ENCODE measurements at regions of chr17 and their contacts with region 1.

Region 1: DNA sequence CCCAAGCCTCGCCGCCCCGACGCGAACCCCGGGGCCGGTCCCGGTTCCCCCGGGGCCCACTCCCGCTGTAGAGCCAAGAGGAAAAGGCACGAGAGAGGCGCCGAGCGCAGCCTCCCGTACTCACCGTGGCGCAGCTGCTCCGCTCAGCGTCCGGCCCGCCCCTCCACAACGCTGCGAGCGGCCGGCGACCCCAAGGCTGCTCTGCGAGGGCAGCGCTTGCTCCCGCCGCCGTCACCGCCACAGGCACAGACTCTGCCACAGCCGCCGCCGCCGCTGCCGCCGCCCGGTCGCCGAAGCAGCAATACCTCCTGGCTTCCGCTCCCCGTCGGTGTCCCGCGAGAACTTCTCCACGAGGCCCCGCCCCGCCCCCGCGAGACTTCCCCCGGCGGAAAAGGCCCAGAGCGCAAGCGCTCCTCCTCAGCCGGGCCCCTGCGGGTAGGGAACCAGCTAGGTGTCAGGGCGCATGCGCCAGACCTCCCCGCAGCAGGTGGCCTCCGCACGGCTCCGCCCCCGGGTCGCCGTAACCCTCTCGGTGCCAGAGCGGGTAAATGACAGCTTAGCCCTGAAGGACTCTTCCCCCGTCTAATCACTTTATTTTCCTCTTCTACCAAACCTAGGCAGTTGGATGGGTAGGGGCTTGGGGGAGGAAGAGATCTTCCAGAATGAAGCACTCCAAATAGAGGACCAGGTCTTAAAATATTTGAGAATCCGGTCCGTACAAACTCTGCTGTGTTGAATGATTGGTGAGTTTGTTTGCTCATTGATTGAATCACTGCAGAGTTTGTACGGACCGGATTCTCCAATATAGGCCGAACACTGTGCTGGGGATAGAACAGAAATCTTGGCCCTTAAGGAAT is at the start of gene GRB2:
- DNase-seq: peak; percentile 100
- ATAC-seq: peak; percentile 81
- H3K4me3 Mint-ChIP-seq: peak within 1 kb of the TSS; percentile 90
- H3K27ac Mint-ChIP-seq: peak within 1 kb of the TSS; percentile 96
- H3K4me1 Mint-ChIP-seq: peaks cover 35% of the 10 kb centered on the region
- H3K27me3 Mint-ChIP-seq: no peaks in the 10 kb centered on the region
- total RNA-seq, gene GRB2: 157 to 168 TPM

Region 2: DNA sequence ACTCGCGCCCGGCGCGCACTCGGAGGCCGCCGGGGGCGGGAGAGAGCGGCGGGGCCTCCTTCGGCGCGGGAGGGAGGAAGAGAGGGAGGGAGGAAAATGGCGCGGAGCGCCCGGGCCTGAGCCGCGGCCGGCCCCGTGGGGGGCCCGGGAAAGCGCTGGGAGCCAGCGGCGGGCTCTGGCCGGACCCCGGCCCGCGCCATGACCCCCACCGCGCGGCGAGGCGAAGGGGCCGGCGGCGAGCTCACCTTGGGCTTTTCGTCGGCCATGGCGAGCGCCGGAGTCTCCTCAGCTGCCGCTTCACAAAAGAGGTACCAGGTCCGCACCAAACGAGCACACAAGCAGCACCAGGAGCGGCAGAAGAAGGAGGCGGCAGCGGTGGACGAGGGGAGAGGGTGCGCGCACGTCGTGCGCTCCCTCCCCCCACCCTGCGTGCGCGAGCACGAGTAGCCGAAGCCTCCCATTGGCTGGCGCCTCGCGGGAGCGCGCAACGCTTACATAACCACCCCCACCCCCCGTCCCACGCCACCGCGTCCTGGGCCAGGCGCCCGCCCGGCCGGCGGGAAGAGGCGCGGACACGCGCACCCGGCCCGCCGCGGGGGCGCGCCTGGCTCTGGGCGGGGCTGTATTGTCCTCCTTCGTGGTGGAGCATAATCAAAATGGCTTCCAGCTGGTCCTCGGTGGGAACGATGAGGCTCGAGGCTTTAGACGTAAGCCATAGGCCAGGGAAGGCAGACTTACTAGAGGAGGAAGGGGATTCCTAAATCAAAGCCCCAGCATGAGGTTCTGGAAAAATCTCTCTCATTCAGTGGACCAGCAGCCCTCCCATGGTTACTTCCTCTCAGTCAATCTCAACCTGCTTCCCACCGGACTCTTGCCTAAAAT is 222.8 kb before region 1 on chr17 and contains the start of gene SUMO2:
- CTCF ChIA-PET with region 1: no interaction called
- POLR2A ChIA-PET with region 1: no interaction called
- intact Hi-C with region 1: loop called in 1 of 2 experiments (anchors 1 kb)
- DNase-seq: peak; percentile 98
- ATAC-seq: peak; percentile 85
- H3K4me3 Mint-ChIP-seq: peak within 1 kb of the TSS; percentile 97
- H3K27ac Mint-ChIP-seq: peak within 1 kb of the TSS; percentile 96
- H3K4me1 Mint-ChIP-seq: peaks cover 45% of the 10 kb centered on the region
- H3K27me3 Mint-ChIP-seq: no peaks in the 10 kb centered on the region
- total RNA-seq, gene SUMO2: 594 to 727 TPM

Region 3: GRCh38 chr17:75261336-75262111 is 144.1 kb before region 1 on chr17 and contains the starts of genes GGA3 and MRPS7:
- CTCF ChIA-PET with region 1: interaction called, 4 read pairs
- POLR2A ChIA-PET with region 1: interaction called, 6 read pairs
- intact Hi-C with region 1: loop called in 1 of 2 experiments (anchors 1 kb)
- DNase-seq: peak; percentile 98
- ATAC-seq: peak; percentile 91
- H3K4me3 Mint-ChIP-seq: peak within 1 kb of the TSS; percentile 88
- H3K27ac Mint-ChIP-seq: peak within 1 kb of the TSS; percentile 96
- H3K4me1 Mint-ChIP-seq: peaks cover 48% of the 10 kb centered on the region
- H3K27me3 Mint-ChIP-seq: no peaks in the 10 kb centered on the region
- total RNA-seq, gene GGA3: 72.9 to 76.7 TPM
- total RNA-seq, gene MRPS7: 51.4 to 63.8 TPM

Region 4: DNA sequence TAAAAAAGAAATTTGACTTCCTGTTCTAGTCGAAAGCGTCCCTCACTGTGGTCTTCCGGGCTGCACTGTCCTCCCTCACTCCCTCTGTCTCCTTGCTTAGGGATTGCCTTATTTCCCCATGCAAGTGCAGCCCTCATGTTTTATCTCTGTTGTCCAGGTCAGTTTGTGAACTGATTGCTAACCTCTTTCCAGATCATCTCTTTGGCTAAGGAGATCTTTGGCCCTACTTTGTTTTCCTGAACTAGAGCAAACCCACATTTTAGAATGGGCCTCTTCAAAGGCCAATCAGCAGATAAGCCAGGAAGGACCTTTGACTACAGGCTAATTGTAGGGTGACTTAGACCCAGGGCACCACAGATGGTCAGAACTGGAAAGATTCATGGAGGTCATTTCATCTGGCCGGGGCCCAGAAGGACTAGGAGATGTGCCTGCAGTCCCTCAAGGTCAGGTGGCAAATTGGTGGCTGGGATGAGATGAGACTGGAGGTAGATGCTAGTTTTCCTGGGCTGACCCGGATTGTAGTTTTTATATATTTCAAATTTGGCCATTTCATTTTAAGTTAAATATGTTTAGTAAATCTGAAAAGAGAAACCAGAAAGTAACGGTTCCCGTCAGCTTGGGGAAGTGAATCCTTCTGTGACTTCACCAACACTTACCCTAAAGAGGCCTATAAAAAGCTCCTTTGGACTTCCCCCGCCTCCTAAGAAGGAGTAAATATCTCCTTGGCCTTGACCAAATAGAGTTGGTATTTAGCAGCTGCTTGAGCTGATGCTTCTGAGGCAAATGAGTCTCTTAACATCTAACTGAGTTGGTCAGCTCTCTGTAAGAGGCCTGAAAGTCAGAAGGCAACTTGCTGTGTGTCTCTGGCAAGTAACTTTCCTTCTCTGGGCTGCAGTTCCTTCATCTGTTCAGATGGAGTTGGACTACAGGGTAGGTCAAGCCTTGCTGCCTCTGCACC is 110.1 kb before region 1 on chr17:
- CTCF ChIA-PET with region 1: interaction called, 5 read pairs
- POLR2A ChIA-PET with region 1: interaction called, 3 read pairs
- intact Hi-C with region 1: loop called (anchors 1 kb)
- DNase-seq: peak; percentile 57
- ATAC-seq: peak; percentile 83
- H3K4me3 Mint-ChIP-seq: peak overlapping the region; percentile 5
- H3K27ac Mint-ChIP-seq: peak overlapping the region; percentile 92
- H3K4me1 Mint-ChIP-seq: peaks cover 43% of the 10 kb centered on the region
- H3K27me3 Mint-ChIP-seq: no peaks in the 10 kb centered on the region

Region 5: DNA sequence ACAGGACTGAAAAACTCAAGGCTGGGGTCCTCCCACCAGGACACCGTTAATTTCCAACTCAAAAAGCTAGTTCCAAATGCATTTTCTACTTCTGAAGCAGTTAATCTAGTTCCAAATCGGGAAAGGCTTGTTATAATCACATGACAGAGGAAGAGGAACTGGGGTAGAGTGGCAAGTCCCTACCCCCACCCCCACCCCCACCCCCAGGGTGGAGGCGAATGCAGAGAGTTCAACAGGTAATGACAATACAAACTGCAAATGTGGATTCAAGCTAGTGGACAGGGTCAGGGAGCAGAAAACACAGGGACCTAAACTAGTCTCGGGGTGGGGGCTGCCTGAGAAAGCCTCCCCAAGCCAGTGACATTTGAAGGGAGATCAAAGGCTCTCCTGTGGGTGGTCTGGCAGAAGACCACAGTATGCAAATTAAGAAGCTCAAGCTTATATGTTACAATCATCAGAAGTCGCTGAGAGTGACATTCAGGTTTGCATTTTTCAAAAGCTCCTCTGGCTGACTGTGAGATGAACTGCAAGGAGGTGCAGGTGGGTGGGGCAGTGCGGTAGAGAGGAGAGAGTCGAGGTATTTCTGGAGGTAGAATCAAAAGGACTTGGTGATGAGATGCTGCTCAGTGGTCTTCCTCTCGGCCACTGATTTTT is 60.0 kb before region 1 on chr17:
- CTCF ChIA-PET with region 1: interaction called, 3 read pairs
- POLR2A ChIA-PET with region 1: no interaction called
- intact Hi-C with region 1: loop called in 1 of 2 experiments (anchors 2 kb)
- DNase-seq: peak; percentile 74
- ATAC-seq: peak; percentile 58
- H3K4me3 Mint-ChIP-seq: peak overlapping the region; percentile 60
- H3K27ac Mint-ChIP-seq: peak overlapping the region; percentile 90
- H3K4me1 Mint-ChIP-seq: peaks cover 97% of the 10 kb centered on the region
- H3K27me3 Mint-ChIP-seq: no peaks in the 10 kb centered on the region

Region 6: DNA sequence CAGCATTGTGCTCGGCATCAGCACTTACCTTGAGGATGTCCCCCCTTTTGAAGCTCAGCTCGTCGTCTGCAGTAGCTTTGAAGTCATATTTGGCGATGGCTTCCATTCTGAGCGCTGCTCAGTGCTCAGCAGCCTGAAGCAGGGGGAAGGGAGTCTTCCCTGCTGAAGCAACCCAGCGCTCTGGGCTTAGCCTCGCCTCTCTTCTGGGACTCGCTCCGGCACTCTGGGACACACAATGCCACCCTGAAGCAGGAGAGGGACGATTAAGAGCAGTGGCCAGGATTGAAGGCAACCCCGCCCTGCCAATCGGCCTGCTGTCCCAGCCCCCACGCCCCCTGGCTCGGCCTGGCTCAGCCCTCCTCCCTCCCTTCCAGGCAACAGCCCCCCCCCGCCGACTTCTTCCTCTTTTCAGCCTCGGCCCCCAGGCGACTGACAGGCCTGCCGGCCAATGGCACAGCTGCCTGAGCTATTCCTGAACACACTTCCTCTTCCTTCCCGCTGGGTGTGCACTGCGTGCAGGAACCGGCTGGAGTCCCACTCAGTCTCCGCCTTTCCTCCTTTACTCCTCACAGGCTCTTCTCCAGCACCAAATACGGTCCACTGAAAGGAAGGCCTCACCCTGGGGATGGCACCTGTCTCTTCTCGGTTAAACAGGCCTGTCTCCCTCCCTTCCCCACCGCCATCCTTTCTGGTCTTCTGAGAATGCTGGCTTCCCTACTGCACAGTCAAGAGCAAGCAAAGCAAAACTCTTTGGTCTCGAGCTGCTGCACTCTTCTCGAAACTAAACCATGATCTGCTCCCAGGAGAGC is 11.9 kb before region 1 on chr17:
- CTCF ChIA-PET with region 1: interaction called, 16 read pairs
- POLR2A ChIA-PET with region 1: interaction called, 7 read pairs
- intact Hi-C with region 1: loop called (anchors 1 kb)
- DNase-seq: peak; percentile 91
- ATAC-seq: peak; percentile 91
- H3K4me3 Mint-ChIP-seq: peak overlapping the region; percentile 91
- H3K27ac Mint-ChIP-seq: peak overlapping the region; percentile 71
- H3K4me1 Mint-ChIP-seq: peaks cover 75% of the 10 kb centered on the region
- H3K27me3 Mint-ChIP-seq: no peaks in the 10 kb centered on the region

Region 7: GRCh38 chr17:75487351-75488070 is 81.9 kb after region 1 on chr17:
- CTCF ChIA-PET with region 1: no interaction called
- POLR2A ChIA-PET with region 1: no interaction called
- intact Hi-C with region 1: no loop called
- DNase-seq: peak; percentile 56
- ATAC-seq: peak; percentile 81
- H3K4me3 Mint-ChIP-seq: peak overlapping the region; percentile 24
- H3K27ac Mint-ChIP-seq: peak overlapping the region; percentile 88
- H3K4me1 Mint-ChIP-seq: peaks cover 16% of the 10 kb centered on the region
- H3K27me3 Mint-ChIP-seq: no peaks in the 10 kb centered on the region

Region 8: DNA sequence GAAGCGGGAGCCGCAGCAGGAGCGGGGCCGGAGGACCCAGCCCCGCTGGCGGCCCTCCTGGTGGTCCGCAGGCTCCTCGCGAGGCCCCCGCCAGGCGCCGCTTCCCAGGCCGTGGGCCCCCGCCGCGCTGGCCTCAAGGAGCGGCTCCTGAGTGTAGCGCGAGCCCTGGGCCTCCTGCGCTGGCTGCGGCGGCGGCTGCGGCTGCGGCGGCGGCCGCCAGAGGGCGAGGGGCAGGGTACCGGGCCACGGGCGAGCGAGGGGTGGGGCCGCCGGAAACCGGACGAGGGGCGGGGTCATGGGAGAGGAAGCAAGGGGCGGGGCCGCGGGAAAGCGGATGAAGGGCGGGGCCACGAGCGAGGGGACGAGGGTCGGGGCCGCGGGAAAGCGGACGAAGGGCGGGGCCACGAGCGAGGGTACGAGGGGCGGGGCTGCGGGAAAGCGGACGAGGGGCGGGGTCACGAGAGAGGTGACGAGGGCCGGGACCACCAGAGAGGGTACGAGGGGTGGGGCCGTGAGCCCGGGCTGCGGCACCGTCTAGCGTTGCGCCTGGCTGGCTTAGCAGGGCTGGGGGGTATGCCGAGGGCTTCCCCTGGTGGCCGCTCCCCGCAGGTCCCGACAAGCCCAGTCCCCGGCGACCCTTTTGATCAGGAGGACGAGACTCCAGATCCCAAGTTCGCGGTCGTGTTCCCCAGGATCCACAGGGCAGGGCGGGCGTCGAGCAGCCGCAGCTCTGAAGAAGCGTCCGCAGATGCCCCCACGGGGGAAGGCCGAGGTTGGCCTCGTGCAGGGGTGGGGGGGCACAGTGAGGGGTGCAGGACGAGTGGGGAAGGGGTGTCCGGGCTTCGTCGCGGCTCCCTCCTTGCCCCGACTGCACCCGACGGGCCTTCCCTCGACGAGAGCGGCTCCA is 183.7 kb after region 1 on chr17:
- CTCF ChIA-PET with region 1: no interaction called
- POLR2A ChIA-PET with region 1: no interaction called
- intact Hi-C with region 1: loop called in 1 of 2 experiments (anchors 1 kb)
- DNase-seq: peak; percentile 99
- ATAC-seq: peak; percentile 90
- H3K4me3 Mint-ChIP-seq: peak overlapping the region; percentile 72
- H3K27ac Mint-ChIP-seq: peak overlapping the region; percentile 42
- H3K4me1 Mint-ChIP-seq: no peaks in the 10 kb centered on the region
- H3K27me3 Mint-ChIP-seq: peaks cover 2% of the 10 kb centered on the region

Region 9: DNA sequence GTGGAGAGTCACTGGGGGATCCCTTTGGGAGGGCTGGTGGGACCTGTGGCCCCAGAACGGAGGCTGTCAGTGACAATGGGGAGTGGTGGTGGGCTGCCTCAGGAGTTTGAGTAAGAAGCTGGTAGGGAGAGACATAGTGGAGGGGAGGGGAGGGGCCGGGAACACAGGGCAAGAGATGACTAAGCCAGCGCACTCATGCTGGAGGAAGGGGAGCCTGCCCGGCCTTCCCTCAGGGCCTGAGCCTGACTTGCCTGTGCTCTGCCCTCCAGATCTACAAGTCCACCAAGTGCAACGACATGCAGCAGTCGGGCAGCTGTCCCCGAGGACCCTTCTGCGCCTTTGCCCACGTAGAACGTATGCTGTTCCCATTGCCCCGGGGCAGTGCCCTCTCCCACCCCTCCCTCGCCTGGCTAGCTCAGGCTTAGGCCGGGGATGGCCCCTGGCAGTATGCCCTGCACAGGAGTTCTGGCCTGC is 409.3 kb after region 1 on chr17:
- CTCF ChIA-PET with region 1: no interaction called
- POLR2A ChIA-PET with region 1: no interaction called
- intact Hi-C with region 1: no loop called
- DNase-seq: no peak
- ATAC-seq: no peak
- H3K4me3 Mint-ChIP-seq: no peak overlapping the region
- H3K27ac Mint-ChIP-seq: no peak overlapping the region
- H3K4me1 Mint-ChIP-seq: no peaks in the 10 kb centered on the region
- H3K27me3 Mint-ChIP-seq: no peaks in the 10 kb centered on the region

Measured in activated CD4-positive, alpha-beta T cell treated with anti-CD3 and anti-CD28 coated beads for 36 hours (primary cell).